ENCODE measurements at regions of chr13 and their contacts with region 1.

Region 1: DNA sequence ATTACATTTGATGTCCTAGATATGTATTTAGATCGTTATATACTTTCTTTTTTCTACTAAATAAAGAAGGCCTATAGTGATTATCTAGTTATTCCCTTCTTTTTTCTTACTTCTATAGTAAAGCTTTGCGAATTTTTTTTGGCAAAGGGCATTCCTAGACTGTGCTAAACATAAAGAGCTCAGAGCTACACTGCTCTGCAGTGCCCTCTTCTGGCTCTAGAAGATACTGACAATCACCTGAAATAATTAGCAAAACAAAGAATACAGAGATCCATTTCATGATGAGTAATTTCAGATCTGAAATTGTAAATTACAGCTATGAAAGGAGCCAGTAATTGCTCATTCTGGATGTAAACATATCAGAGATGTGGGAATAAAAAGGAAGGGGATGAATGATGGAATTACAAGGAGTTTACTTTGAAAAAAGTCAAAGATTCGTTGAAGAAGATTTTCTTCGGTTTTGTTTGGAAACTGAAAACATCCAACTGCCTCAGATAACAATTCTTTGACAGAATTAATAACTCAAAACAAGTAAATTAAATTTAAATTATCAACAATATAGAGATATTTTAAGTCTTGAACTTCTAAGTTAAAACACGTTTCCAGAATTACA is 288.5 kb downstream of the NALCN start:
- DNase-seq: peak; percentile 36

Region 2: GRCh38 chr13:101492251-101492910 is 364.5 kb after region 1 on chr13:
- in situ Hi-C with region 1: loop called (anchors 25 kb)
- DNase-seq: no peak

Region 3: DNA sequence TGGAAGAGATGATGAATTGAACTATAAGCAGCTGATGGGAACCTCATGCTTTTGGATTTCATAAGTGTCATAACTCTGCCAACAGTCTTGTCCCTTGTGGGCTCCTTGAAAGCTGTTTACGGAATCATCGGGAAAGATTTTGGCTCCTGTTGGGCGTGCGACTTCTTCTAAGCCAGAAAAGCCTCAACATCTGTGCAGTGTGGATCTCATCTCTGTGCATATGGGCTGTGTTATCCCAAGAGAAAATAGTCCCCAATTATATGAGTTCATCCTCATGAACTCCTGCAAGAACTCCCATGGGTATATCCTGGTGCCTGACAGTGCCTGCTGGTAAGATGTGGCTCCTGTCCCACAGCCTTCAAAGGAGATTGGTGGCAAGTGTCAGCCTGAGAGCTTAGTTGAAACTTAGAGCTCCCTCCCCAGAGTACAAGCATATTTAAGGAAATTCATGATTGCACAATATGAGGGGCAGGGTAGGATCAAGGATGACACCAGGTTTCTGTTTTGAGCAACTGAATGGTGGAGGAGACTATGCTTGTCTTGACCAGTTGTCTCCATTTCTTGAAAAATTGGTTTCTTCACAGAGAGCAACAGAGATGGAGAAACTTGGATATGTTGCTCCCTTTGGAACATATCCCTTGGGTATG is 568.1 kb after region 1 on chr13:
- in situ Hi-C with region 1: no loop called
- DNase-seq: no peak